ENCODE measurements at regions of chr10 and their contacts with region 1.

Region 1: GRCh38 chr10:85008488-85009184 is 680.2 kb downstream of the CCSER2 start:
- DNase-seq: no peak
- ATAC-seq: no peak

Region 2: GRCh38 chr10:84991301-84991700 is 17.3 kb before region 1 on chr10:
- intact Hi-C with region 1: loop called (anchors 1 kb)
- DNase-seq: no peak
- ATAC-seq: no peak

Region 3: GRCh38 chr10:85492684-85493083 is 484.0 kb after region 1 on chr10:
- intact Hi-C with region 1: loop called (anchors 5 kb)
- DNase-seq: no peak
- ATAC-seq: no peak

Region 4: GRCh38 chr10:85565381-85565780 is 556.7 kb after region 1 on chr10:
- intact Hi-C with region 1: no loop called
- DNase-seq: no peak
- ATAC-seq: no peak